Right cardiac atrium (tissue), 5 donors: ENCODE measurements at regions of chr2 and their contacts with region 1.

Region 1: GRCh38 chr2:101883863-101884262 is 107.9 kb upstream of the IL1R2 start:
- DNase-seq: no peak
- ATAC-seq: peak; percentile 63 to 69
- H3K4me3 ChIP-seq: no peak overlapping the region
- H3K27ac ChIP-seq: no peak overlapping the region
- H3K4me1 ChIP-seq: peaks cover 2% of the 10 kb centered on the region
- H3K27me3 ChIP-seq: no peaks in the 10 kb centered on the region

Region 2: DNA sequence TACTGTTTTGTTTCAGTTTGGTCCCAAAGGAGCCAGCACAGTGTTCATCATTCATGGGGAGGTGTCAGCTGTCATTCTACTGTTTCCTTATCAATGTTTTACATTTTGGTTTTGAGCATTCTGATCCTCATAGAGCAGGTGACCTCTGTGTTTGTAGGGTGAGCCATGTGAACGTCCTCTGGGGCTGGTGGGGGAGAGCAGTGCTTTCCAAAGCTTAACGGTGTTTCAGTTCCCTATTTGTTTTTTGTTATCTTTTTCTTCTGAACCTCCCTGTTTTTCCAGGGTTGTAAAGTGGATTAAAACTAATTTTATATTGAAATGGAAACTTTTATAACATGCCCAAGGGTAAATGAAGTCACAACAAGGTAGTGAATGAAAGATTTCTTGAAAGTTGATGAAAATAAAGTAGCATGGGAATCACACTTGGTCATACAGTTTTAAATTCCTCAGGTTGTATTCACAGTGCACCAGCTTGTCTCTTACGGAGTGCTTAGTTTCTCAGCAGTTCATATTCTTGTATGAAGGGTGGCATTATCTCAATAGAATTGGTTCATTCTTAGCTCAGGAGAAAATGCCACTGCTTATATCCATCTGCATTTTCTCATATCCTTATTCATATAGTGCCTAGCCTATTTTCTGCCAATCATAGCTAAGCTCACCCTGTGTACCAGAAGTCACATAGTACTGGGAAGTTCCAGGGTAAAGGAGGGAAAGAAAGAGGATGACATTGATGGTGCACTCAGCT is 131.8 kb before region 1 on chr2:
- intact Hi-C with region 1: no loop called
- DNase-seq: no peak
- ATAC-seq: peak; percentile 45
- H3K4me3 ChIP-seq: no peak overlapping the region
- H3K27ac ChIP-seq: no peak overlapping the region
- H3K4me1 ChIP-seq: peaks cover 15% of the 10 kb centered on the region
- H3K27me3 ChIP-seq: no peaks in the 10 kb centered on the region

Region 3: GRCh38 chr2:101942851-101943250 is 59.0 kb after region 1 on chr2:
- intact Hi-C with region 1: no loop called
- DNase-seq: no peak
- ATAC-seq: no peak
- H3K4me3 ChIP-seq: no peak overlapping the region
- H3K27ac ChIP-seq: no peak overlapping the region
- H3K4me1 ChIP-seq: no peaks in the 10 kb centered on the region
- H3K27me3 ChIP-seq: no peaks in the 10 kb centered on the region

Region 4: DNA sequence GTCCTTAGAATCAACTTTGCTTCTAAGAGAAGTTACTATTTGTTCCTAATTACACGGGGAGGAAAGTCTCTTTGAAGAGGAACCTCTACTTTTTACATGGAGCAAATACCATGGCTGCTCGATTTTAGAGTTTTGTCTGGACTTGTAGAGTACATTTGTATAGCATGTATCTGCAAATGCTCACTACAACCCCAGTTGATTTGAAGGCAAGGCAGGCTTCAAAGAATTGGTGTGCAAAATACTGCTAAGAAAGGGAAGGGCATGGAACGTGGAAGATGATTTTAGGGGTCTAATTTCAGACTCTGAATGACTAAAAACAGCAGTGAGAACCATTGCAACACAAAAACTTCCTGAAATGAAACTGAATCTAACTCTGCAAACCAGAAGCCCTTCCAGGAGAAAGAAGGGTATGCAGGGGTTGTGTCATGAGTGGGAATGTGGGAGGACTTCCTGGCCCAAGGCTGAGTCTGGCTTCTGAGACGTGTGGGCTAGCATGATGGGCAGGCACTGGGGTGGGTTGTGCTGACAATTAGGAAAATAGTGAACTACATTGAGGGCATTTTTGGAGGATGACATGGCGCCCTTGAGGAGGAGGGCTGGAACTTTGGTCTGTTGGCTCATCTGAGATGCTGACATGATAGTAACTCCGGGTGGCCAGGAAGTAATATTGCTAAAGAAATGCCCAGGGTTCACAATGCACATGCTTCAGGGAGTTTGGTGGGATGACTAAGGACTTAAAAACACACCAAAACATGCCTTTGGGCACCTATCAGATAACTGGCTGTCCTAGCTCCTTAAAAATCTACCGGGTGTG is 89.0 kb after region 1 on chr2:
- intact Hi-C with region 1: loop called in 1 of 4 experiments (anchors 10 kb)
- DNase-seq: no peak
- ATAC-seq: peak in 1 of 2 donors; percentile 63
- H3K4me3 ChIP-seq: no peak overlapping the region
- H3K27ac ChIP-seq: no peak overlapping the region
- H3K4me1 ChIP-seq: no peaks in the 10 kb centered on the region
- H3K27me3 ChIP-seq: no peaks in the 10 kb centered on the region